Heart right ventricle (tissue), 16 donors: ENCODE measurements at regions of chr7 and their contacts with region 1.

Region 1: GRCh38 chr7:152463709-152464311 is 28.0 kb upstream of the KMT2C start:
- DNase-seq: peak; percentile 100
- ATAC-seq: peak; percentile 93 to 99 (median 98)
- H3K4me3 ChIP-seq: peak overlapping the region; percentile 87 to 99 (median 94)
- H3K27ac ChIP-seq: peak overlapping the region; percentile 99 to 100 (median 100)
- H3K4me1 ChIP-seq: peaks cover 0 to 34% (median 14%) of the 10 kb centered on the region in 9 donors
- H3K27me3 ChIP-seq: no peaks in the 10 kb centered on the region
- CTCF ChIP-seq: no peak

Region 2: DNA sequence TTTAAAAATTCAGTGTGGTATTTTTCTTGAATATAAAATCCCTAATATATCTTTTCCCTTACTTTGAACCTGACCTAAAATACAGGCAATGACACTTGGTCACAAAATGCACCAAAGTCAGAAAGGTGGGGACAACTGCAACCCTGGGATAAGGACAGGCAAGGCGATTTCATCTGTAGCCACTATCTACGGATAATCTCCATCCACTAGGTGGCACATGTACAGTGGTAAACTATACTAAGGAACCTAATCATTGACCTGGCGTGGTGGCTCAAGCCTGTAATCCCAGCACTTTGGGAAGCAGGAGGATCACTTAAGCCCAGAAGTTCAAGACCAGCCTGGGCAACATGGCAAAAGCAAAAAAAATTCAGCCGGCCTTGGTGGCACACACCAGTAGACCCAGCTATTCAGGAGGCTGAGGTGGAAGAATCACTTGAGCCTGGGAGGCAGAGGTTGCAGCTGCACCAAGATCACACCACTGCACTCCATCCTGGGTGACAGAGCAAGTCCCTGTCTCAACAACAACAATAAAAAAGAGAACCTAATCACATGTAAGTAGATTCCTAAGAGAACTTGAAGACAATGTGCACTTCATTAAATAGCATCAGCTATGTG is 126.9 kb before region 1 on chr7:
- intact Hi-C with region 1: loop called in 2 of 10 experiments (anchors 5 to 10 kb)
- DNase-seq: peak in 1 of 2 donors; percentile 14
- ATAC-seq: peak in 7 of 8 donors; percentile 59 to 79 (median 69)
- H3K4me3 ChIP-seq: peak overlapping the region in 1 of 10 donors; percentile 24
- H3K27ac ChIP-seq: peak overlapping the region in 2 of 10 donors; percentile 13 to 40
- H3K4me1 ChIP-seq: peaks cover 5 to 70% (median 43%) of the 10 kb centered on the region in 9 donors
- H3K27me3 ChIP-seq: no peaks in the 10 kb centered on the region
- CTCF ChIP-seq: peak in 8 of 9 donors; percentile 27 to 64 (median 46)

Region 3: GRCh38 chr7:152354066-152354465 is 109.7 kb before region 1 on chr7:
- intact Hi-C with region 1: loop called in 1 of 10 experiments (anchors 10 kb)
- DNase-seq: no peak
- ATAC-seq: no peak
- H3K4me3 ChIP-seq: no peak overlapping the region
- H3K27ac ChIP-seq: no peak overlapping the region
- H3K4me1 ChIP-seq: peaks cover 0 to 9% (median 0%) of the 10 kb centered on the region in 9 donors
- H3K27me3 ChIP-seq: no peaks in the 10 kb centered on the region
- CTCF ChIP-seq: no peak

Region 4: GRCh38 chr7:152436111-152436930 is 27.5 kb before region 1 on chr7:
- intact Hi-C with region 1: loop called in 3 of 10 experiments (anchors 1 to 2 kb)
- DNase-seq: peak; percentile 94 to 96
- ATAC-seq: peak; percentile 87 to 94 (median 88)
- H3K4me3 ChIP-seq: peak overlapping the region; percentile 41 to 99 (median 78)
- H3K27ac ChIP-seq: peak overlapping the region; percentile 93 to 100 (median 98)
- H3K4me1 ChIP-seq: peaks cover 0 to 33% (median 28%) of the 10 kb centered on the region in 9 donors
- H3K27me3 ChIP-seq: no peaks in the 10 kb centered on the region
- CTCF ChIP-seq: no peak

Region 5: DNA sequence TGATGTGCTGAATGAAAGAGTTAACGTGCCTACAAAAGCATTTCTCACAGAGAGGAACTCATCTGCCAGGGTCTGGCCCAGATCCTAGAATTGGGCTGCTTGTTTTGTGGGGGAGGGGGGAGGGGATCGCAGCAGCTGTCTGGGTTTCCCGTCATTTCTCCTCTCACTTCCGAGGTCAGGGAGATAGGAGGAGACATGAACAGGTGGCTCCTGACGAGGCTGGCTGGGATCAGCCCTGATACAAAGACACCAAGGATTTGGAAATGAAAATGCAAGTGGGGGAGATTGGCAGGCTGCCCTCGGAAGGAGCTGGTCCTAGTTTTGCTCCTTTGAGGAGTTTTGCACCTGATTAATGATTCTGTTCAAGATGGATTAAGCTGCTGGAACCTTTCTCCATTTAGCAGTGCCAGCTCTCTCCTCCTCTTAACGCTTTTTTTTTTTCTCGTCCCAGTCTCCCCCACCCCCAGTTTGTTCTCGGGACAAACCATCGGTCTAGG is 58.8 kb after region 1 on chr7:
- intact Hi-C with region 1: no loop called
- DNase-seq: peak in 1 of 2 donors; percentile 21
- ATAC-seq: peak in 4 of 8 donors; percentile 14 to 74 (median 37)
- H3K4me3 ChIP-seq: peak overlapping the region in 5 of 10 donors; percentile 5 to 33 (median 23)
- H3K27ac ChIP-seq: no peak overlapping the region
- H3K4me1 ChIP-seq: peaks cover 0 to 16% (median 11%) of the 10 kb centered on the region in 9 donors
- H3K27me3 ChIP-seq: no peaks in the 10 kb centered on the region
- CTCF ChIP-seq: no peak

Region 6: DNA sequence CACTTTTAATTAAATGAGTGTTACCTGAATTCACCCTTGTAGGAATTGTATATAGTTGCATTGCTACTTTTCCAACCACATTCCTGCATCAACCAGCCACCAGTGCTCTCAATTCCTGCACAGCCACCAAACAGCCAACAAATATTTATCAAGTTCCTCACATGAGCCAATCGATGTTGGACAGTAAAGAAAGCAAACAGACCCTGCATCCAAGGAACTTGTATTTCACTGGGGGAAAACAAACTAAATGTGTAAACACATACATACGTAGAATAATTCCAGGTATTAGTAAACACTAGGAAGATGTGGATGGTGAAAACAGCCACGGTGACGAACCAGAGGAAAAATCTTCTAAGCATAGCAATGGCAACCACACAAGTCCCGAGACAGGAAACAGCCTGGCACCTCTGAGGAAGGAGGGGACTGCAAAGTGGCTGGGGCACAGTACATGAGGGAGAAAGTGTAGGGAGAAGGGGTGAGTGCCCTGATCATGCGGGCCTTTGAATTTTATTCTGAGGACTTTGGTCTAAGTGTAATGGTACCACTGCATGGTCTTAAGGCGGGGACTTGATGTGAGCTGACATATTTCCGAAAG is 100.9 kb after region 1 on chr7:
- intact Hi-C with region 1: no loop called
- DNase-seq: no peak
- ATAC-seq: no peak
- H3K4me3 ChIP-seq: no peak overlapping the region
- H3K27ac ChIP-seq: no peak overlapping the region
- H3K4me1 ChIP-seq: no peaks in the 10 kb centered on the region
- H3K27me3 ChIP-seq: peaks cover 0 to 17% (median 0%) of the 10 kb centered on the region in 7 donors
- CTCF ChIP-seq: no peak

Region 7: GRCh38 chr7:152675759-152676636 is 212.2 kb after region 1 on chr7 and contains the start of gene XRCC2:
- intact Hi-C with region 1: loop called in 5 of 10 experiments (anchors 2 to 10 kb)
- DNase-seq: peak; percentile 91 to 94
- ATAC-seq: peak; percentile 99 to 100 (median 100)
- H3K4me3 ChIP-seq: peak within 1 kb of the TSS; percentile 47 to 83 (median 68)
- H3K27ac ChIP-seq: peak within 1 kb of the TSS; percentile 61 to 91 (median 82)
- H3K4me1 ChIP-seq: peaks cover 3 to 15% (median 11%) of the 10 kb centered on the region in 9 donors
- H3K27me3 ChIP-seq: no peaks in the 10 kb centered on the region
- CTCF ChIP-seq: no peak
- total RNA-seq, gene XRCC2: 0.27 to 0.71 (median 0.50) TPM